ENCODE measurements at regions of chr5 and their contacts with region 1.

Region 1: DNA sequence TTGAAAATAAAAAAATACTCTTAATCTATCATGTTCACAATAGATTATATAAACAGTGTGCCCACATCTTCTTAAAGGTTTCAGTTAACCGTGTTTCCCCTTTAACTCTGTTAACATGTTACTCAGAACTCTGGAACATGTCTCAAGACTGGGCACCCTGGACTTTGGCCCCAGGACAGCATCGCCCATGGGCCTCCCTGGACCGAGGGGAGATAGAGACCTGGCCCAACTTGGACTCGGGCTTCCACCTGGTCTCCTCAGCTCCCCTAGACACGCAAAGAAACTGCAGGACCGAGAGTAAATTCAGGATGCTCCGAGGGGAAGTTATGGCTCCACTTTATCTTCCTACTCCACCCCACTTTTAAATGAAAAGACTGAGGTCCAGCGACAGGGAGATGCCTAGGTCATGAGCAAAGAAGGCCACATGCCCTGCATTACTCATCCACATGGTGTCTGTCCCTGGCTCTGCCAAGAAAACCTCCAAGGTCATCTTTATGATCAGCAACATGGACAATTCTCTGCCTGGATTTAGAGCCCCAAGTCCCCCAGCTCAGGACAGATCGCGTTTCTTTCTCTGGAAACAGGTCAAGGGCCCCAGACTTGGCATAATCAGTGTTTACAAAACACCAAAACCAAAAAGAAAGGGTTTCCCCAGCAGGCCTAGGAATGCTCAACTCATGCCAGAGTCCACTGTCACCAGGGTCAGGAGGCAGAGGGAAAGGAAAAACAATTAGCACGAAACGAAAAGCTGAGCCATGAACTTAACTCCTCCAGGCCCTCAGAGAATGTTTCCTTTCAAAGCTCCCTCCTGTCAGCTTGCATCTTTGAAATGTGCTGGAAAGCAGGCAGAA is 17.4 kb downstream of the GPX3 start:
- DNase-seq: no peak

Region 2: DNA sequence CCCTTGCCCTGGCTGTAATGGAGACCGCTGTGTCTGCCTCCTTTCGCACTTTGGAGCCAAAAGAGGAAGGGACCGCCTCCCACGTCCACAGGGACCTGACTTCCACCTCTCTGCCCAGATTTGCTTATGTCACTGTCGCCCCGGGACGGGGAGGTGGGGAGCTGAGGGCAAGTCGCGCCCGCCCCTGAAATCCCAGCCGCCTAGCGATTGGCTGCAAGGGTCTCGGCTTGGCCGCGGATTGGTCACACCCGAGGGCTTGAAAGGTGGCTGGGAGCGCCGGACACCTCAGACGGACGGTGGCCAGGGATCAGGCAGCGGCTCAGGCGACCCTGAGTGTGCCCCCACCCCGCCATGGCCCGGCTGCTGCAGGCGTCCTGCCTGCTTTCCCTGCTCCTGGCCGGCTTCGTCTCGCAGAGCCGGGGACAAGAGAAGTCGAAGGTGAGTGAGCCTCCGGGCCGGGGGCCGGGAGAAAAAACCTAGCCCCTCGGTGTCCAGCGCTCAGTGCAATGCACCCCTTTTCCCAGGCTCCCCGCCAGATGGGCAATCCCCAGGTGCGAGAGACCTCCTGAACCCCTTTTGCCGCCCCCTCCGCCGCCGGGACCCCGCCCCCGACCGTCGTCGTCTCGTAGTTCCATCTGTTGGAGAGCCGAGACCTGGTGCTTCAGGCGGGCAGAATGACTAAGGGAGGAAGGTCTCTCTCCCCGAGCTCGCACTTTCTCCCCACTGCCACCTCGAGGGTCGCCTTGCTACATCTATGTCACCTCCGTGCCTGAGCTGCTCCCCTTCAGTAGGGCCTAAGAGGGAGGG is 17.3 kb before region 1 on chr5 and contains the start of gene GPX3:
- intact Hi-C with region 1: loop called (anchors 2 kb)
- DNase-seq: peak; percentile 97
- total RNA-seq, gene GPX3: 461 TPM

Measured in cardiac septum (tissue), 1 donor.